ENCODE measurements at regions of chr2 and their contacts with region 1.

Region 1: GRCh38 chr2:190319555-190320498 is at the start of gene HIBCH:
- DNase-seq: peak; percentile 98 to 99 (median 98)
- H3K4me3 ChIP-seq: peak within 1 kb of the TSS; percentile 52
- H3K27ac ChIP-seq: peak within 1 kb of the TSS; percentile 78
- H3K4me1 ChIP-seq: peaks cover 3% of the 10 kb centered on the region
- H3K27me3 ChIP-seq: no peaks in the 10 kb centered on the region
- CTCF ChIP-seq: peak; percentile 72 to 88 (median 75)
- EP300 ChIP-seq: no peak
- POLR2A ChIP-seq: peak; percentile 24
- total RNA-seq, gene HIBCH: 11.4 to 28.4 (median 21.9) TPM

Region 2: GRCh38 chr2:190379249-190379964 is 59.6 kb after region 1 on chr2:
- intact Hi-C with region 1: loop called in 1 of 4 experiments (anchors 10 kb)
- DNase-seq: no peak
- H3K4me3 ChIP-seq: no peak overlapping the region
- H3K27ac ChIP-seq: no peak overlapping the region
- H3K4me1 ChIP-seq: no peaks in the 10 kb centered on the region
- H3K27me3 ChIP-seq: no peaks in the 10 kb centered on the region
- CTCF ChIP-seq: no peak
- EP300 ChIP-seq: no peak
- POLR2A ChIP-seq: no peak

Region 3: GRCh38 chr2:190746971-190747761 is 427.3 kb after region 1 on chr2:
- intact Hi-C with region 1: no loop called
- DNase-seq: no peak
- H3K4me3 ChIP-seq: no peak overlapping the region
- H3K27ac ChIP-seq: no peak overlapping the region
- H3K4me1 ChIP-seq: peaks cover 2% of the 10 kb centered on the region
- H3K27me3 ChIP-seq: no peaks in the 10 kb centered on the region
- CTCF ChIP-seq: no peak
- EP300 ChIP-seq: no peak
- POLR2A ChIP-seq: no peak